HCT116 (cell line): ENCODE measurements at regions of chr10 and their contacts with region 1.

Region 1: GRCh38 chr10:72048450-72049124 is 39.8 kb downstream of the SPOCK2 start:
- DNase-seq: peak; percentile 91
- ATAC-seq: peak; percentile 91
- H3K4me3 ChIP-seq: no peak overlapping the region
- H3K27ac ChIP-seq: no peak overlapping the region
- H3K4me1 ChIP-seq: peaks cover 0 to 4% of the 10 kb centered on the region in 2 experiments; a peak in 1 of 4 replicates
- H3K27me3 ChIP-seq: no peaks in the 10 kb centered on the region
- CTCF ChIP-seq: peak; percentile 100
- POLR2A ChIP-seq: no peak
- RAD21 ChIP-seq: peak; percentile 100

Region 2: GRCh38 chr10:71916827-71917226 is 131.8 kb before region 1 on chr10:
- CTCF ChIA-PET with region 1: interaction called, 17 read pairs
- POLR2A ChIA-PET with region 1: no interaction called
- RAD21 ChIA-PET with region 1: interaction called in 1 of 2 experiments, 4 read pairs
- intact Hi-C with region 1: loop called (anchors 5 kb)
- DNase-seq: no peak
- ATAC-seq: no peak
- H3K4me3 ChIP-seq: no peak overlapping the region
- H3K27ac ChIP-seq: no peak overlapping the region
- H3K4me1 ChIP-seq: peaks cover 0 to 18% of the 10 kb centered on the region in 2 experiments; a peak in 2 of 4 replicates
- H3K27me3 ChIP-seq: no peaks in the 10 kb centered on the region
- CTCF ChIP-seq: no peak
- POLR2A ChIP-seq: no peak
- RAD21 ChIP-seq: no peak

Region 3: GRCh38 chr10:72038458-72039001 is 10.1 kb before region 1 on chr10:
- CTCF ChIA-PET with region 1: interaction called, 22 read pairs
- POLR2A ChIA-PET with region 1: no interaction called
- RAD21 ChIA-PET with region 1: no interaction called
- intact Hi-C with region 1: no loop called
- DNase-seq: no peak
- ATAC-seq: peak; percentile 46; the same call in 1 of the 2 replicates
- H3K4me3 ChIP-seq: no peak overlapping the region
- H3K27ac ChIP-seq: no peak overlapping the region
- H3K4me1 ChIP-seq: peaks cover 0 to 13% of the 10 kb centered on the region in 2 experiments; a peak in 2 of 4 replicates
- H3K27me3 ChIP-seq: no peaks in the 10 kb centered on the region
- CTCF ChIP-seq: no peak
- POLR2A ChIP-seq: no peak
- RAD21 ChIP-seq: no peak

Region 4: DNA sequence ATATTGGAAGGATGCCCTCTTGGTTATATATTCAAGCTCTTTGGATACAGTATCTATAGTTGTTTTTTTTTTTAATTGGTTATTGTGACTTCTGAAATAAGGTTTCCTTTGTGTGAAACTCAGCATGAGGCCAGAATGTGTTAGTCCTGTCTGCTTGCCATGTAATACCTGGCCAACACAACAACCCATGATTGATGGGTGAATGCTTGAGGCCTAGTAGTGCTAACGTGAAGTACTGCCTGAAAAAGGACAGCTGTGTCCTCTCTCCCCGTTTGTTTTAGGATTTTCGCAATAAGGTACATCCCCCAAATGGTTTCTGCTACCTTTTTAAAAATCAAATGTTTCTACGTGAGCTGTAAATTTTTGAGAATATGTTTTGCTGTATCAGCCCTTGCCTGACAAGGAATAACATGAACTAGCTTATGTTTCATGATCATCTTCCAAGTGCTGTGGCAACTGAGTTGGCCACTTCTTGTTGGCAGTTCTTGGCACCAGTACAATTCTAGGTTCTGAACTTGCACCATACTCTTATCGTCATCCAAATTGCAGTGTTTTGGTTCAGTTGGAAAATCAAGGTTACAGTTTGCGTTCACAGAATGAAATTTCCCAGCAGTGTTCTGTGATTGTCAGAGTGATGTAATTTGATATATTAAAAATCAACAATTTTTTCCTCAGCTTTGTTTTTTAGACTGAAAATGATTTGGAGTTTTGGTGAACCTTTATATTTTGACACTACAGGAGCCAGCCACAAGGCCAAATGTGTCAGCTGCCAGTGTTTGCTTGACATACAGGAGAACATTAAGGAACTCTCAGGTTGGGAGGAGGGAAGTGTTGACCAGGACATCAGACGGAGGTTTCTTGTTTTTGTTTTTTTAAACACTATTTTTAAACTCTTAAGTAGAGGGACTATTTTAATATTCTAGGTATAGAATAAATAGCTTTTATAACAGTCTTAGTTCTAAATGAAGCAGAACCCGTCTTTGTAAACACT is 181.0 kb after region 1 on chr10:
- CTCF ChIA-PET with region 1: no interaction called
- POLR2A ChIA-PET with region 1: no interaction called
- RAD21 ChIA-PET with region 1: no interaction called
- intact Hi-C with region 1: loop called (anchors 5 kb)
- DNase-seq: no peak
- ATAC-seq: no peak
- H3K4me3 ChIP-seq: no peak overlapping the region
- H3K27ac ChIP-seq: no peak overlapping the region
- H3K4me1 ChIP-seq: no peaks in the 10 kb centered on the region
- H3K27me3 ChIP-seq: no peaks in the 10 kb centered on the region
- CTCF ChIP-seq: no peak
- POLR2A ChIP-seq: no peak
- RAD21 ChIP-seq: no peak